CD4-positive, alpha-beta memory T cell (primary cell): ENCODE measurements at regions of chr4 and their contacts with region 1.

Region 1: GRCh38 chr4:185209031-185209851 is at the start of gene SNX25:
- DNase-seq: peak; percentile 84 to 88 (median 86)
- H3K4me3 ChIP-seq: peak within 1 kb of the TSS; percentile 57 to 59
- H3K4me3 Mint-ChIP-seq: peak within 1 kb of the TSS; percentile 92 to 96 (median 93)
- H3K27ac ChIP-seq: peak within 1 kb of the TSS; percentile 46
- H3K27ac Mint-ChIP-seq: peak within 1 kb of the TSS; percentile 92 to 98 (median 93)
- H3K4me1 ChIP-seq: peaks cover 44% of the 10 kb centered on the region
- H3K4me1 Mint-ChIP-seq: peaks cover 33 to 62% (median 49%) of the 10 kb centered on the region in 4 donors
- H3K27me3 ChIP-seq: no peaks in the 10 kb centered on the region
- H3K27me3 Mint-ChIP-seq: no peaks in the 10 kb centered on the region
- total RNA-seq, gene SNX25: 23.0 to 24.5 TPM

Region 2: GRCh38 chr4:185142912-185143595 is 66.2 kb before region 1 on chr4 and contains the start of gene SLC25A4:
- CTCF ChIA-PET with region 1: no interaction called
- POLR2A ChIA-PET with region 1: interaction called, 12 read pairs
- intact Hi-C with region 1: no loop called
- DNase-seq: peak; percentile 77 to 83 (median 81)
- H3K4me3 ChIP-seq: peak within 1 kb of the TSS; percentile 40 to 57
- H3K4me3 Mint-ChIP-seq: peak within 1 kb of the TSS; percentile 87 to 98 (median 90)
- H3K27ac ChIP-seq: peak within 1 kb of the TSS; percentile 26
- H3K27ac Mint-ChIP-seq: peak within 1 kb of the TSS in 6 of 7 donors; percentile 69 to 89 (median 83)
- H3K4me1 ChIP-seq: peaks cover 15% of the 10 kb centered on the region
- H3K4me1 Mint-ChIP-seq: peaks cover 8 to 24% (median 16%) of the 10 kb centered on the region in 4 donors
- H3K27me3 ChIP-seq: peaks cover 6% of the 10 kb centered on the region
- H3K27me3 Mint-ChIP-seq: peaks cover 8 to 13% of the 10 kb centered on the region in 2 donors
- total RNA-seq, gene SLC25A4: 6.4 to 7.2 TPM

Region 3: GRCh38 chr4:185256446-185256845 is 47.2 kb after region 1 on chr4:
- CTCF ChIA-PET with region 1: interaction called, 3 read pairs
- POLR2A ChIA-PET with region 1: interaction called, 35 read pairs
- intact Hi-C with region 1: loop called (anchors 1 kb)
- DNase-seq: no peak
- H3K4me3 ChIP-seq: peak overlapping the region in 1 of 2 donors; percentile 23
- H3K4me3 Mint-ChIP-seq: peak overlapping the region in 6 of 8 donors; percentile 52 to 88 (median 76)
- H3K27ac ChIP-seq: peak overlapping the region; percentile 49
- H3K27ac Mint-ChIP-seq: peak overlapping the region in 5 of 7 donors; percentile 83 to 99 (median 91)
- H3K4me1 ChIP-seq: peaks cover 73% of the 10 kb centered on the region
- H3K4me1 Mint-ChIP-seq: peaks cover 33 to 71% (median 57%) of the 10 kb centered on the region in 4 donors
- H3K27me3 ChIP-seq: no peaks in the 10 kb centered on the region
- H3K27me3 Mint-ChIP-seq: no peaks in the 10 kb centered on the region

Region 4: GRCh38 chr4:185425647-185426352 is 216.6 kb after region 1 on chr4 and contains the start of gene UFSP2:
- CTCF ChIA-PET with region 1: interaction called, 3 read pairs
- POLR2A ChIA-PET with region 1: interaction called, 10 read pairs
- intact Hi-C with region 1: loop called (anchors 1 kb)
- DNase-seq: peak; percentile 91 to 96 (median 92)
- H3K4me3 ChIP-seq: peak within 1 kb of the TSS; percentile 45 to 77
- H3K4me3 Mint-ChIP-seq: peak within 1 kb of the TSS; percentile 89 to 98 (median 96)
- H3K27ac ChIP-seq: peak within 1 kb of the TSS; percentile 99
- H3K27ac Mint-ChIP-seq: peak within 1 kb of the TSS; percentile 92 to 100 (median 100)
- H3K4me1 ChIP-seq: peaks cover 24% of the 10 kb centered on the region
- H3K4me1 Mint-ChIP-seq: peaks cover 23 to 46% (median 29%) of the 10 kb centered on the region in 4 donors
- H3K27me3 ChIP-seq: no peaks in the 10 kb centered on the region
- H3K27me3 Mint-ChIP-seq: peaks cover 1 to 2% of the 10 kb centered on the region in 2 donors
- total RNA-seq, gene UFSP2: 30.1 to 30.3 TPM